CD4-positive, alpha-beta memory T cell (primary cell): ENCODE measurements at regions of chr10 and their contacts with region 1.

Region 1: GRCh38 chr10:130110246-130111112 is at the start of gene C10orf143:
- DNase-seq: peak; percentile 98 to 100 (median 99)
- H3K4me3 ChIP-seq: peak within 1 kb of the TSS; percentile 72 to 87
- H3K4me3 Mint-ChIP-seq: peak within 1 kb of the TSS; percentile 92 to 99 (median 98)
- H3K27ac ChIP-seq: peak within 1 kb of the TSS; percentile 87
- H3K27ac Mint-ChIP-seq: peak within 1 kb of the TSS; percentile 94 to 100 (median 99)
- H3K4me1 ChIP-seq: peaks cover 46% of the 10 kb centered on the region
- H3K4me1 Mint-ChIP-seq: peaks cover 34 to 72% (median 53%) of the 10 kb centered on the region in 4 donors
- H3K27me3 ChIP-seq: no peaks in the 10 kb centered on the region
- H3K27me3 Mint-ChIP-seq: no peaks in the 10 kb centered on the region
- total RNA-seq, gene C10orf143: 9.2 TPM

Region 2: DNA sequence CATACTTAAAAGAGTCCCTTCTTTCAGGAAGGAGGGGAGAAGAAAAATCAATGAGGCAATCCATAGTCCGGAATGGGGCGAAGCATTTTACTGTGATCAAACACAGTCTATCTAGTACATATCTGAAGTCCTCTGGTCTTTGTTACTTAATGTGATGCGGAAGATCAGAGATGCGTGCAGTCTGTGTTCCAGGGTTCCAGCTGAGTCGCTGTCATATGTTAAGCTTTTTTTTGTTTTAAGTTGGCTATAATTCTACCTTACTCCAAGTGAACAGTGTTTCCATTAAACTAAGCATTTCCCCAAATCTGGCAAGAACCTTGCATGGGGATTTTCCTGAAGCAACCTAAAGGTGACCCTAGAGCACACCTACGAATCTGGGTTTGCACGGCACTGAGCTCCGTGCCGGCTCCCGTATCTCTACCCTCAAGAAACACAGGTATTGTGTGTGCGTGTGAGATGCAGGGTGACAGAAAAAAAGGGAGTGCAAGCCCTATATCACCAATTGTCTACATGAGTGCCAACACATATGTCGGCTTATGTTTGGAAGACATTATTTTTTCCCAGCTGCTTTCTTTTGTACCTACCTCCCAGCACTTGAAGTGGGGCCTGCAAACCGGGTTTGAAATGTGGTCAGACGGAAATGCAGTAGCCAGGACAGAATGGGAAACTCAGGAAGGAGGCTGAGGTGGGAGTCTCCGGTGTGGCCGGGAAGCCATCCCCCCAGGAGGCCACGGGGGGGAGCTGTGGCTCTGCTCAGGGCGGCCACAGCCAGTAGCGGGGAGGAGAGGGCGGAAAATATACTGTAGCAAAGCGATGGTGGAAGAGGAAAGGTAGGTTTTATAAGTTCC is 1079.3 kb before region 1 on chr10:
- CTCF ChIA-PET with region 1: interaction called, 3 read pairs
- POLR2A ChIA-PET with region 1: no interaction called
- intact Hi-C with region 1: loop called (anchors 5 kb)
- DNase-seq: peak in 4 of 5 donors; percentile 23 to 47 (median 34)
- H3K4me3 ChIP-seq: no peak overlapping the region
- H3K4me3 Mint-ChIP-seq: peak overlapping the region in 4 of 8 donors; percentile 1 to 67 (median 32)
- H3K27ac ChIP-seq: no peak overlapping the region
- H3K27ac Mint-ChIP-seq: no peak overlapping the region
- H3K4me1 ChIP-seq: peaks cover 23% of the 10 kb centered on the region
- H3K4me1 Mint-ChIP-seq: peaks cover 11 to 34% (median 24%) of the 10 kb centered on the region in 4 donors
- H3K27me3 ChIP-seq: no peaks in the 10 kb centered on the region
- H3K27me3 Mint-ChIP-seq: peaks cover 2 to 3% of the 10 kb centered on the region in 2 donors

Region 3: DNA sequence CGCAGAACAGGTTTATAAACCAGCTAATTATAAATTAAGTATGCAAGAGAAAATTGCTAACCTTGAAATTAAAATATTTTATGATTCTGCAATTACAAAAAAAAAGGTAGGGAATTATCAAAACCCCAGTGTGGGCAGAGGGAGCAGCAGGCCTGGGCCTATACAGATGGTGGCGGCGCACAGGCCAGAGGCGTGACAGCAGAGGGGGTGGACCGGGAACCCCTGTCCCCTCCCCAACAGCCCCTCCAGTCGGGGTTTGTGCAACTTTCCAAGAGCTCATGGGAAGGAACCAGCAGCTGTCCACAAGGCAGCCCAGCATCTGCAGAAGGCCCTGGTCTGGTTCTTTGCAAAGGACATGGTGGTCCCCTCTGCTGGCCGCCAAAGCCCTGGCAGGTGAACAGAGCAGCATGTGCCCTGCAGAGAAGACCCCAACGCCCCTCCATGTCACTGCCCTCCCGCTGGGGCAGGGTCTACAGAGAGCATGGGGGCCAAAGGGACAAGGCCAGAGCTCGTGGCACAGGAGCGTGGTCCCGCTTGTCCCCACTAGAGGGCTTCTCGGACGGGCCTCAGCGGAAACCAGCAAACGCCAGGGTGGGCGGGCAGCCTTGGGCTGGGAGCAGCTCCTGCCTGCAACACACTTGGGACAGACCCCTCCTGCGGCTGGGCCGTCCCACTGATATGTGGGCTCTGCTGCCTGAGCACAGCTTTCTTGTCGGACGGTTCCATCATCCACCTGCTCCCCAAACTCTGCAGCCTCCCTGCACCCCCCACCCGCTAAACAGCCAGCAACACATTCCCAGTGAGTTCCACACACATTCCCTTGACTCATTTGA is 221.5 kb before region 1 on chr10:
- CTCF ChIA-PET with region 1: interaction called, 7 read pairs
- POLR2A ChIA-PET with region 1: interaction called, 4 read pairs
- intact Hi-C with region 1: loop called (anchors 5 kb)
- DNase-seq: peak in 3 of 5 donors; percentile 11 to 28 (median 13)
- H3K4me3 ChIP-seq: no peak overlapping the region
- H3K4me3 Mint-ChIP-seq: no peak overlapping the region
- H3K27ac ChIP-seq: no peak overlapping the region
- H3K27ac Mint-ChIP-seq: no peak overlapping the region
- H3K4me1 ChIP-seq: no peaks in the 10 kb centered on the region
- H3K4me1 Mint-ChIP-seq: no peaks in the 10 kb centered on the region
- H3K27me3 ChIP-seq: no peaks in the 10 kb centered on the region
- H3K27me3 Mint-ChIP-seq: peaks cover 0 to 1% of the 10 kb centered on the region in 2 donors

Region 4: GRCh38 chr10:130127364-130128061 is 17.0 kb after region 1 on chr10:
- CTCF ChIA-PET with region 1: interaction called, 56 read pairs
- POLR2A ChIA-PET with region 1: interaction called, 11 read pairs
- intact Hi-C with region 1: loop called (anchors 1 kb)
- DNase-seq: peak; percentile 38 to 55 (median 53)
- H3K4me3 ChIP-seq: no peak overlapping the region
- H3K4me3 Mint-ChIP-seq: no peak overlapping the region
- H3K27ac ChIP-seq: no peak overlapping the region
- H3K27ac Mint-ChIP-seq: no peak overlapping the region
- H3K4me1 ChIP-seq: peaks cover 5% of the 10 kb centered on the region
- H3K4me1 Mint-ChIP-seq: peaks cover 4 to 5% (median 5%) of the 10 kb centered on the region in 4 donors
- H3K27me3 ChIP-seq: peaks cover 12% of the 10 kb centered on the region
- H3K27me3 Mint-ChIP-seq: peaks cover 11 to 15% of the 10 kb centered on the region in 2 donors

Region 5: DNA sequence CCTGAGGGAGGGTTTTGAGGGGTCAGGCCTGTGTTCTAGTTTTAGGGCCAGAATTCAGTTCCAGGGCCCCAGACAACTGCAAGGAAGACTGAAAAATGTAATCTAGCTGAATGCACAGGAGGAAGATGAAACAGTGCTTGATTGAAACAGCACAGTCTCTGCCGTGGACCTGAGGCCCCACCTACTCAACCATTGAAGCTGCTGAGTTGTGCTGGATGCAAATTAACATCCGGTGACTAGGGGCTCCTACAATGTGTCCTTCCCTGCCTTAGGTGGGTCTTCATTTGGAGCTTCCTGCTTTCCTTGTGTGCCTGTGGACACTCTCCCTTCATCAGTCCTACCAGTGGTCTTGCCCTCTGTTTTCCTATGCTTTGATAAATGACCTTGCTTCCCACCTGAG is 31.4 kb after region 1 on chr10:
- CTCF ChIA-PET with region 1: interaction called, 60 read pairs
- POLR2A ChIA-PET with region 1: interaction called, 178 read pairs
- intact Hi-C with region 1: no loop called
- DNase-seq: no peak
- H3K4me3 ChIP-seq: no peak overlapping the region
- H3K4me3 Mint-ChIP-seq: peak overlapping the region in 6 of 8 donors; percentile 23 to 62 (median 38)
- H3K27ac ChIP-seq: no peak overlapping the region
- H3K27ac Mint-ChIP-seq: peak overlapping the region in 6 of 7 donors; percentile 2 to 89 (median 75)
- H3K4me1 ChIP-seq: peaks cover 66% of the 10 kb centered on the region
- H3K4me1 Mint-ChIP-seq: peaks cover 51 to 75% (median 57%) of the 10 kb centered on the region in 4 donors
- H3K27me3 ChIP-seq: no peaks in the 10 kb centered on the region
- H3K27me3 Mint-ChIP-seq: no peaks in the 10 kb centered on the region

Region 6: GRCh38 chr10:130179640-130180039 is 69.2 kb after region 1 on chr10:
- CTCF ChIA-PET with region 1: interaction called, 13 read pairs
- POLR2A ChIA-PET with region 1: no interaction called
- intact Hi-C with region 1: no loop called
- DNase-seq: peak in 4 of 5 donors; percentile 44 to 54 (median 50)
- H3K4me3 ChIP-seq: no peak overlapping the region
- H3K4me3 Mint-ChIP-seq: no peak overlapping the region
- H3K27ac ChIP-seq: no peak overlapping the region
- H3K27ac Mint-ChIP-seq: peak overlapping the region in 4 of 7 donors; percentile 20 to 84 (median 70)
- H3K4me1 ChIP-seq: no peaks in the 10 kb centered on the region
- H3K4me1 Mint-ChIP-seq: peaks cover 11 to 19% (median 12%) of the 10 kb centered on the region in 4 donors
- H3K27me3 ChIP-seq: no peaks in the 10 kb centered on the region
- H3K27me3 Mint-ChIP-seq: no peaks in the 10 kb centered on the region

Region 7: DNA sequence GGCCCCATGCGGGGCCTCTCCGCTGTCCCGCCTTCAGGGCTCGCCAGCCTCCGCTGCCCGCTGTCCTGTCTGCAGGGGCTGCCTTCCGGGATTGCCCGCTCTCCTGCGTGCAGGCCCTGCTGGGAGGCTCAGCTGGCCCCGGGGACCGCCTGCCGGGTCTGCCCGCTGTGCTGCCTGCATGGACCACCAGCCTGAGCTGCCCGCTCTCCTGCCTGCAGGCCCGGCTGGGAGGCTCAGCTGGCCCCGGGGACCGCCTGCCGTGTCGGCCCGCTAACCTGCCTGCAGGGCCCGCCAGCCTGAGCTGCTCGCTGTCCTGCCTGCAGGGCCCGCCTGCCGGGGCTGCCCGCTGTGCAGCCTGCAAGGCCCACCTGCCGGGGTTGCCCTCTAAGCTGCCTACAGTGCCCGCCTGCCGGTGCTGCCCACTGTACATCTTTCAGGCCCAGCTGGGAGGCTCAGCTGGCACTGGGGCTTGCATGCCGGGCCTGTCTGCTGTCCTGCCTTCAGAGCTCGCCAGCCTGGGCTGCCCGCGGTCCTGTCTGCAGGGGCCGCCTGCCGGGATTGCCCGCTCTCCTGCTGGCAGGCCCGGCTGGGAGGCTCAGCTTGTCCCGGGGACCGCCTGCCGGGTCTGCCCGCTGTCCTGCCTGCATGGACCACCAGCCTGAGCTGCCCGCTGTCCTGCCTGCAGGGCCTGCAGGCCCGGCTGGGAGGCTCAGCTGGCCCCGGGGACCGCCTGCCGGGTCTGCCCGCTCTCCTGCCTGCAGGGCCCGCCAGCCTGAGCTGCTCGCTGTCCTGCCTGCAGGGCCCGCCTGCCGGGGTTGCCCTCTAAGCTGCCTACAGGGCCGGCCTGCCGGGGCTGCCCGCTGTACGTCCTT is 190.8 kb after region 1 on chr10:
- CTCF ChIA-PET with region 1: interaction called, 5 read pairs
- POLR2A ChIA-PET with region 1: interaction called, 19 read pairs
- intact Hi-C with region 1: no loop called
- DNase-seq: peak; percentile 65 to 75 (median 69)
- H3K4me3 ChIP-seq: peak overlapping the region in 1 of 2 donors; percentile 9
- H3K4me3 Mint-ChIP-seq: peak overlapping the region; percentile 26 to 85 (median 76)
- H3K27ac ChIP-seq: peak overlapping the region; percentile 25
- H3K27ac Mint-ChIP-seq: peak overlapping the region in 5 of 7 donors; percentile 79 to 85 (median 82)
- H3K4me1 ChIP-seq: peaks cover 6% of the 10 kb centered on the region
- H3K4me1 Mint-ChIP-seq: peaks cover 5 to 26% (median 8%) of the 10 kb centered on the region in 4 donors
- H3K27me3 ChIP-seq: no peaks in the 10 kb centered on the region
- H3K27me3 Mint-ChIP-seq: no peaks in the 10 kb centered on the region